Activated CD4-positive, alpha-beta memory T cell treated with anti-CD3 and anti-CD28 coated beads for 36 hours (primary cell): ENCODE measurements at regions of chr3 and their contacts with region 1.

Region 1: DNA sequence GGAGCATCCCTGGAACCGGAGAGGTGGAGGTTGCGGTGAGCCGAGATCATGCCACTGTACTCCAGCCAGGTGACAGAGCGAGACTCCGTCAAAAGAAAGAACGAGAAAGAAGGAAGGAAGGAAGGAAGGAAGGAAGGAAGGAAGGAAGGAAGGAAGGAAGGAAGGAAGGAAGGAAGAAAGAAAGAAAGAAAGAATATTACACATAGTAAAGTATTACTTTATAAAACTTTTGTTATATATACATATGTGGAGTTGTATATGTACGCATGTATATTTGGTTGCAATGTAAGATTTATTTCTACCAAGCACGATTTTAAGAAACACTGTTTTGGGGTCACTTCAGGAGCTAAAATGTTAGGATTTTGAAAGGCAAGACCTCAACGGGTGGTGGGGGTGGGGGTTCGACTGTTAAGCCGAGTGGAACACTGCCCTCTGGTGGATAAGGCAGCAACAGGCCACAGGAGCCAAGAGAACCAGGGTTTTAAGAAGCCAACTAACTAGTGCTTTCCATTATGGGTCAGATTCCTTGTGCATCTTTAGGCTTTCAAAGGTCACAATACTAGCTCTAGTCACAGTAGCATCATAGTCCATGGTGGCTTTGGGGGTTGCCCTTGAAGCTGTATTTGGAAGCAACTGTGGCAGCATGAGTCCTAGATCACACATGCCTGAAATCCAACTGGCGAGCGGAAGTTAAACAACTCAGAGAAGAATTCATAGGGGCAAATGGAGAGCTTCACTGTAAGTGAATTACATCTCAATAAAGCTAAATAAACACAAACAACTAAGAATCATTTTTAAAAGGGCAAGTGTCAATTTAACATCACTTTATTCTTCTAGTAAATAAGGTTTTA is 22.5 kb downstream of the GLB1 start:
- DNase-seq: peak; percentile 82
- H3K4me3 Mint-ChIP-seq: no peak overlapping the region
- H3K27ac Mint-ChIP-seq: peak overlapping the region; percentile 21
- H3K4me1 Mint-ChIP-seq: peaks cover 43% of the 10 kb centered on the region
- H3K27me3 Mint-ChIP-seq: no peaks in the 10 kb centered on the region

Region 2: GRCh38 chr3:32751377-32751776 is 323.1 kb before region 1 on chr3:
- CTCF ChIA-PET with region 1: no interaction called
- POLR2A ChIA-PET with region 1: no interaction called
- intact Hi-C with region 1: no loop called
- DNase-seq: no peak
- H3K4me3 Mint-ChIP-seq: no peak overlapping the region
- H3K27ac Mint-ChIP-seq: no peak overlapping the region
- H3K4me1 Mint-ChIP-seq: no peaks in the 10 kb centered on the region
- H3K27me3 Mint-ChIP-seq: no peaks in the 10 kb centered on the region

Region 3: GRCh38 chr3:32960404-32961170 is 113.9 kb before region 1 on chr3:
- CTCF ChIA-PET with region 1: interaction called, 17 read pairs
- POLR2A ChIA-PET with region 1: no interaction called
- intact Hi-C with region 1: no loop called
- DNase-seq: peak; percentile 54
- H3K4me3 Mint-ChIP-seq: peak overlapping the region; percentile 41
- H3K27ac Mint-ChIP-seq: peak overlapping the region; percentile 97
- H3K4me1 Mint-ChIP-seq: peaks cover 84% of the 10 kb centered on the region
- H3K27me3 Mint-ChIP-seq: no peaks in the 10 kb centered on the region

Region 4: DNA sequence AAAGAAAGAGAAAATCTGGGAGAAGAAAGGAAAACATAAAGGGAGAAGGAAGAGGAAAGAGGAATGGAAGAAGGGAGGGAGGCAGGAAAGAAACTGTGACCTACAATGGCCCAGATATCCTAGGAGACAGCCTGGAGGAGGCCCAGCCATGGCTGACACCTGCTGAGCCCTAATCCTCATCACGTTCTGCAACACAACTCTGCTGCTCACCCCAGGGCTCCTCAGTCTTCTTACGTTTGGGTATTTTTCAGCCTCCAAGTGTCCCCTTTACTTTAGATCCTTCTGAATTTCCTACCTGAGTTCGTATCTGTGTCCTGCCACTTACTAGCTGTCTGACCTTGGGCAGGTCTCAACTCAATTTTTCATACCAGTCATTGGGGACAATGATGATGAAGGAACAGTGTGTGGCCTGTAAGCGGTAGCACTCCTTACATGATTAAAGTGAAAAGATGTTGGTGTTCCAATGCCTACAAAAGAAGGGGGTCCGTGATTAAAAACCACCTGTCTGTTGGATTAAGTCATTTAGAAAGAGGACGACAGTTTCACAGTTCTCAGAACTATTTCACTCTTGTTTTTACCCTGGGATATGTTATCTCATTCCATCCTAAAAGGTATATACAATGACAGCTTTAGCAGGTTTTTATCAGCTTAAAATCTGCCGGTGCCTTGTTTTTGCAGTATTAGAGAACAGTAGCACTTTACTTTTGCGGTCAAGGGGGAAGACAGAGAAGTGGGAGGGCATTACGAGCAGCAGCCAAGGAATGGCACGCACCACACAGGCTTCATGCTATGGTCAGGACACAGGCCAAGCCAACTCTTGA is 75.6 kb before region 1 on chr3:
- CTCF ChIA-PET with region 1: interaction called, 10 read pairs
- POLR2A ChIA-PET with region 1: no interaction called
- intact Hi-C with region 1: no loop called
- DNase-seq: no peak
- H3K4me3 Mint-ChIP-seq: peak overlapping the region; percentile 59
- H3K27ac Mint-ChIP-seq: peak overlapping the region; percentile 86
- H3K4me1 Mint-ChIP-seq: peaks cover 87% of the 10 kb centered on the region
- H3K27me3 Mint-ChIP-seq: no peaks in the 10 kb centered on the region

Region 5: GRCh38 chr3:33030802-33031201 is 43.6 kb before region 1 on chr3:
- CTCF ChIA-PET with region 1: interaction called, 41 read pairs
- POLR2A ChIA-PET with region 1: interaction called, 3 read pairs
- intact Hi-C with region 1: loop called (anchors 1 kb)
- DNase-seq: peak; percentile 72
- H3K4me3 Mint-ChIP-seq: peak overlapping the region; percentile 36
- H3K27ac Mint-ChIP-seq: peak overlapping the region; percentile 76
- H3K4me1 Mint-ChIP-seq: peaks cover 34% of the 10 kb centered on the region
- H3K27me3 Mint-ChIP-seq: no peaks in the 10 kb centered on the region

Region 6: GRCh38 chr3:33047842-33048834 is 26.3 kb before region 1 on chr3:
- CTCF ChIA-PET with region 1: interaction called, 31 read pairs
- POLR2A ChIA-PET with region 1: no interaction called
- intact Hi-C with region 1: no loop called
- DNase-seq: peak; percentile 73
- H3K4me3 Mint-ChIP-seq: peak overlapping the region; percentile 52
- H3K27ac Mint-ChIP-seq: peak overlapping the region; percentile 96
- H3K4me1 Mint-ChIP-seq: peaks cover 79% of the 10 kb centered on the region
- H3K27me3 Mint-ChIP-seq: no peaks in the 10 kb centered on the region

Region 7: GRCh38 chr3:33054100-33055092 is 20.0 kb before region 1 on chr3:
- CTCF ChIA-PET with region 1: interaction called, 31 read pairs
- POLR2A ChIA-PET with region 1: no interaction called
- intact Hi-C with region 1: no loop called
- DNase-seq: no peak
- H3K4me3 Mint-ChIP-seq: peak overlapping the region; percentile 60
- H3K27ac Mint-ChIP-seq: peak overlapping the region; percentile 96
- H3K4me1 Mint-ChIP-seq: peaks cover 76% of the 10 kb centered on the region
- H3K27me3 Mint-ChIP-seq: no peaks in the 10 kb centered on the region

Region 8: GRCh38 chr3:33096093-33096868 is 21.8 kb after region 1 on chr3:
- CTCF ChIA-PET with region 1: interaction called, 13 read pairs
- POLR2A ChIA-PET with region 1: no interaction called
- intact Hi-C with region 1: no loop called
- DNase-seq: peak; percentile 60
- H3K4me3 Mint-ChIP-seq: peak overlapping the region; percentile 97
- H3K27ac Mint-ChIP-seq: peak overlapping the region; percentile 85
- H3K4me1 Mint-ChIP-seq: peaks cover 43% of the 10 kb centered on the region
- H3K27me3 Mint-ChIP-seq: no peaks in the 10 kb centered on the region